MCF 10A (cell line): ENCODE measurements at regions of chrX and their contacts with region 1.

Region 1: DNA sequence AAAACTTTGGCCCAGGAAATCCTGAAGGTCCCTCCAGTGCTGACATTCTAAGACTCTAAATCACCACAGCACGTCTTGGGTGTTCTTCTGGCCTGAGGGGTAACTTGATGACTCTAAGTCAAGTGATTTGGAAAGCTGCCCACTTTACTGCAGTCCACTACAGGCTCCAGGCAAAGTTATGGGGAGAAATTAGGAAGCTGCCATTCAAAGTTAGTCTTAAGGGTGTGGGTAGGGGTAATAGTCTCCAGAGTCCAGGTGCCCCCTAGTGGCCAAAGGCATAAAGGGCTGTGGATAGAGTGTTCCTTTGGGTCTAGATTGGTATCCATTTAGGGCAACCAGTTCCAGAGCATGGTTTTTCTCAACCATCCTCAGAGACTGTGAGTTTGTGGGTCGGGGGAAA is 38.7 kb upstream of the SLC16A2 start:
- DNase-seq: peak; percentile 83
- H3K4me3 Mint-ChIP-seq: no peak overlapping the region
- H3K27ac Mint-ChIP-seq: no peak overlapping the region
- H3K4me1 Mint-ChIP-seq: peaks cover 7% of the 10 kb centered on the region
- H3K27me3 Mint-ChIP-seq: peaks cover 44% of the 10 kb centered on the region
- CTCF ChIP-seq: peak; percentile 81

Region 2: GRCh38 chrX:74133156-74133796 is 249.3 kb before region 1 on chrX:
- CTCF ChIA-PET with region 1: no interaction called
- POLR2A ChIA-PET with region 1: no interaction called
- intact Hi-C with region 1: loop called (anchors 1 kb)
- DNase-seq: peak; percentile 73
- H3K4me3 Mint-ChIP-seq: no peak overlapping the region
- H3K27ac Mint-ChIP-seq: no peak overlapping the region
- H3K4me1 Mint-ChIP-seq: peaks cover 5% of the 10 kb centered on the region
- H3K27me3 Mint-ChIP-seq: peaks cover 52% of the 10 kb centered on the region
- CTCF ChIP-seq: peak; percentile 68

Region 3: DNA sequence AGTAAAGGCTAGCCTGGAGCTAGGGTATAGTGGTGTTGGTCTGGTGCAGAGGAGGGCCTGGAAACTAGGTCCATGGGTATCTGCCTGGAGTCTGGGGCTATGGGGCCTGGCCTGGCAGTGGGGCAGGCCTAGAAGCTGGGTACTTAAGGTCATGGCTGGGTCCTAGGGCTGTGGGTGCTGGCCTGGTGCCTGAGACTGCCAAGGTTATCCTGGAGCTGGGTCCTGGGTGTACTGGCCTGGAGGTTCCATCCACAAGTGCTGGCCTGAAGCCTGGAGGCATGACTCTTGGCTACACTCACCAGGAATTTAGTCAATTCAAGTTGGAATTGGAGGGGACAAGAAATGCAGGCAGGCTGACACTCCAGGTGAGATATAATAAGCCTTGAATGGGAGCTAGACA is 187.0 kb before region 1 on chrX:
- CTCF ChIA-PET with region 1: no interaction called
- POLR2A ChIA-PET with region 1: no interaction called
- intact Hi-C with region 1: no loop called
- DNase-seq: no peak
- H3K4me3 Mint-ChIP-seq: no peak overlapping the region
- H3K27ac Mint-ChIP-seq: no peak overlapping the region
- H3K4me1 Mint-ChIP-seq: no peaks in the 10 kb centered on the region
- H3K27me3 Mint-ChIP-seq: peaks cover 72% of the 10 kb centered on the region
- CTCF ChIP-seq: no peak

Region 4: GRCh38 chrX:74371425-74372222 is 11.0 kb before region 1 on chrX:
- CTCF ChIA-PET with region 1: interaction called, 28 read pairs
- POLR2A ChIA-PET with region 1: interaction called, 3 read pairs
- intact Hi-C with region 1: no loop called
- DNase-seq: peak; percentile 8
- H3K4me3 Mint-ChIP-seq: no peak overlapping the region
- H3K27ac Mint-ChIP-seq: peak overlapping the region; percentile 23
- H3K4me1 Mint-ChIP-seq: peaks cover 15% of the 10 kb centered on the region
- H3K27me3 Mint-ChIP-seq: peaks cover 91% of the 10 kb centered on the region
- CTCF ChIP-seq: no peak

Region 5: GRCh38 chrX:74450803-74451449 is 68.3 kb after region 1 on chrX:
- CTCF ChIA-PET with region 1: interaction called, 8 read pairs
- POLR2A ChIA-PET with region 1: no interaction called
- intact Hi-C with region 1: loop called (anchors 2 kb)
- DNase-seq: peak; percentile 87
- H3K4me3 Mint-ChIP-seq: no peak overlapping the region
- H3K27ac Mint-ChIP-seq: peak overlapping the region; percentile 64
- H3K4me1 Mint-ChIP-seq: peaks cover 18% of the 10 kb centered on the region
- H3K27me3 Mint-ChIP-seq: peaks cover 30% of the 10 kb centered on the region
- CTCF ChIP-seq: no peak

Region 6: DNA sequence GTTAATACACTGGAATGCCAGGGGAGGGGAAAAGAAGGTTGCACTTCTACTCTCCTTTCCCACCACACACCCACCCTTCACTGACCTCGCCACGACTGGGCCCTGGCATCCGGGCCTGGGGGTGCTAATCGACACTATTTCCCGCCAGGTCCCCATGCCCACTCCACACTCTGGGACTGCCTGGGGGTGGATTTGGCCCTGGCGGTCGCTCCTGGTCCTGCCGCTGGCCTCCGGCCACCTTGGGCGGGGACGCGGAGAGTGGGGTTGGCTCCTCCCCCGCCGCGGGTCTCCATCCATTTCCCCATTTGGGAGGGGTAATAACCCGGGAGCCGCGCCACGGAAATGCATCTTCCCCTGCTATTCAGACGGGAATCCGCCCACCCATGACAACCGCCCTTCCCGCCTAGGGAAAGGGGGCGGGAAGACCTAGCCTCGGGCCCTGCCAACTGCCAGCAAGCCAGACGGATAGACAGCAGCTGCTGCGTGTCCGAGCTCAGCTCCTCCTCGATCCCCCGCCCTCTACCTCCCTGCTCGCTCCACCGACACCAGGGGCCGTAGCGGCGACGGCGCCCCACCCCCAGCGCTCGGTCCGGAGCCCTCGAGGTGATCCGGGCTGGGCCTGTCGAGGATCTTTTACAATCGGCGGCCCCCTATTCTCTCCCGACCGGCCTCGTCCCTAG is 153.7 kb after region 1 on chrX:
- CTCF ChIA-PET with region 1: interaction called, 12 read pairs
- POLR2A ChIA-PET with region 1: no interaction called
- intact Hi-C with region 1: loop called (anchors 1 kb)
- DNase-seq: peak; percentile 77
- H3K4me3 Mint-ChIP-seq: peak overlapping the region; percentile 69
- H3K27ac Mint-ChIP-seq: peak overlapping the region; percentile 35
- H3K4me1 Mint-ChIP-seq: peaks cover 13% of the 10 kb centered on the region
- H3K27me3 Mint-ChIP-seq: peaks cover 42% of the 10 kb centered on the region
- CTCF ChIP-seq: peak; percentile 29

Region 7: DNA sequence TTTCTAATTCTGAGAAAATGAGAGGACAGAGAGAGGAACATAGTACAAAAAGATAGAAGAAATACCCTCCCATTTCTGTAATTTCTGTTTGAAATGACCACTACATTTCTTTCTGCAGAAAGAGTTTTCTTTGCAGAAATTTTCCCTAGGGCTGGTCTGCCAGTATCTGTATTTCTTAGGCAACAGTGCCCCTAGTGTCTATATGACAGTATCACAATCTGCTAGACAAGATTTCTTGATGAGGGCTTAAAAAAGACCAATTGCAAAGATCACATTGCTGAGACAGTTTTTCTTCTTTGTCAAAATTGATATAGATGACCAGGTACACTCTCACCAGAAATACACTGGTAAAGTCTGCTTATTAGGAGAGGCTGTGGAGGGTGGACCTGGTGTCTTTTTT is 1221.2 kb after region 1 on chrX:
- CTCF ChIA-PET with region 1: interaction called, 3 read pairs
- POLR2A ChIA-PET with region 1: no interaction called
- intact Hi-C with region 1: loop called (anchors 10 kb)
- DNase-seq: peak; percentile 41
- H3K4me3 Mint-ChIP-seq: no peak overlapping the region
- H3K27ac Mint-ChIP-seq: no peak overlapping the region
- H3K4me1 Mint-ChIP-seq: no peaks in the 10 kb centered on the region
- H3K27me3 Mint-ChIP-seq: peaks cover 10% of the 10 kb centered on the region
- CTCF ChIP-seq: peak; percentile 41